T-cell (primary cell): ENCODE measurements at regions of chr18 and their contacts with region 1.

Region 1: DNA sequence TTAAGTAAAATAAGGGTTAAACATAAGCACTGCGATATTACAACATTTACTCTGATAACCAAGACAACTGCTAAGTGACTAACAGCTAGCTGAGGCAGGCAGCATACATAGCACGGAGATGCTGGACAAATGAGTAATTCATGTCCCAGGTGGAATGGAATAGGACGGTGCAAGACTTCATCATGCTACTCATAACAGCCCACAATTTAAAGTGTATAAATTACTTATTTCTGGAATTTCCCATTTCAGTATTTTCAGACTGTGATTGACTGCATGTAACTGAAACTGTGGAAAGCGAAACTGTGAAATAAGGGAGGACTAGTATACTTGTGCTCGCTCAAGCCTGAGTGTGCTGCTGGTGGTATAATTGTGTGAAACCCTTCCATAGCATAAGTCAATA is 12.9 kb downstream of the IER3IP1 start:
- DNase-seq: no peak
- ATAC-seq: no peak
- H3K4me3 ChIP-seq: no peak overlapping the region
- H3K4me3 Mint-ChIP-seq: no peak overlapping the region
- H3K27ac ChIP-seq: no peak overlapping the region
- H3K27ac Mint-ChIP-seq: no peak overlapping the region
- H3K4me1 ChIP-seq: no peaks in the 10 kb centered on the region
- H3K4me1 Mint-ChIP-seq: peaks cover 17 to 34% (median 27%) of the 10 kb centered on the region in 3 donors
- H3K27me3 ChIP-seq: no peaks in the 10 kb centered on the region
- H3K27me3 Mint-ChIP-seq: no peaks in the 10 kb centered on the region

Region 2: GRCh38 chr18:47150824-47151366 is 12.3 kb before region 1 on chr18:
- CTCF ChIA-PET with region 1: interaction called in 1 of 2 experiments, 4 read pairs
- POLR2A ChIA-PET with region 1: interaction called in 1 of 2 experiments, 13 read pairs
- DNase-seq: peak in 4 of 35 experiments; percentile 2 to 6 (median 4)
- ATAC-seq: peak in 1 of 4 experiments; percentile 11
- H3K4me3 ChIP-seq: peak overlapping the region; percentile 76 to 91
- H3K4me3 Mint-ChIP-seq: peak overlapping the region; percentile 94 to 98 (median 97)
- H3K27ac ChIP-seq: peak overlapping the region; percentile 77
- H3K27ac Mint-ChIP-seq: peak overlapping the region; percentile 96 to 98
- H3K4me1 ChIP-seq: peaks cover 5 to 21% of the 10 kb centered on the region in 2 experiments
- H3K4me1 Mint-ChIP-seq: peaks cover 48 to 53% (median 51%) of the 10 kb centered on the region in 3 donors
- H3K27me3 ChIP-seq: no peaks in the 10 kb centered on the region
- H3K27me3 Mint-ChIP-seq: no peaks in the 10 kb centered on the region